Heart left ventricle (tissue), 16 donors: ENCODE measurements at regions of chr6 and their contacts with region 1.

Region 1: DNA sequence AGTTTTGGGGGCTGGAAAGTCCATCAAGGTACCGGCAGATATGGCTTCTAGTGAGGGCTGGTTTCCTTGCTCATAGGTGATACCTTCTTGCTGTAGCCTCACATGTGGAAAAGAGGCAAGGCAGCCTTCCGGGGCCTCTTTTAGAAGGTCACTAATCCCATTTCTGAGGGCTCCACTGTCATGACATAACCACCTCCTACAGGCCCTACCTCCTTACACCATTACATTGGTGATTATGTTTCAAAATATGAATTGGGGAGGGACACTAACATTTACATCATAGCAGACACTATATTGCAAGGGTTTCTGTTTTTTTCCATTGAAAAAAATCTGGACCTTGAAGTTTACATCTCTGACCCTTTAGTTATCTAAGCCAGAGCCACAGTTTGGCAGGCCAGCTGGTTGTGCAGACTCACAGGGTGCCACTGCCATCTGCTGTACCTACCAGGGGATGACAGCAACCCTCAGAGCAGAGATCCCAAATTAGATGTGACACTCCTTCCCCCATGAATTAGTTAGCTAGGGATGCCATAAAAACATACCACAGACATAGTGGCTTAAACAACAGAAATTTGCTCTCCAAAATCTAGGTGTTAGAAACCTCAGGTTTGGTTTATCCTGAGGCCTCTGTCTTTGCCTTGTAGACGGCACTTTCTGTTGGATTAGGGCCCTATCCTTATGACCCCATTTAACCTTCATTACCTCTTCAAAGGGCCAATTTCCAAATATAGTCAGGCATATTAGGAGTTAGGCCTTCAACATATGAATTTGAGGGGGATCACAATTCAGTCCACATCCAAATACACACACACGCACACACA is 166.4 kb upstream of the RNF217 start:
- DNase-seq: peak in 4 of 5 donors; percentile 25 to 50 (median 38)
- ATAC-seq: peak; percentile 86 to 92 (median 88)
- H3K4me3 ChIP-seq: no peak overlapping the region
- H3K27ac ChIP-seq: no peak overlapping the region
- H3K4me1 ChIP-seq: no peaks in the 10 kb centered on the region
- H3K27me3 ChIP-seq: no peaks in the 10 kb centered on the region
- CTCF ChIP-seq: peak in 11 of 12 donors; percentile 32 to 61 (median 47)
- POLR2A ChIP-seq: no peak

Region 2: GRCh38 chr6:123777563-123777962 is 1018.3 kb before region 1 on chr6:
- intact Hi-C with region 1: loop called in 1 of 10 experiments (anchors 10 kb)
- DNase-seq: no peak
- ATAC-seq: no peak
- H3K4me3 ChIP-seq: no peak overlapping the region
- H3K27ac ChIP-seq: no peak overlapping the region
- H3K4me1 ChIP-seq: no peaks in the 10 kb centered on the region
- H3K27me3 ChIP-seq: no peaks in the 10 kb centered on the region
- CTCF ChIP-seq: peak in 5 of 12 donors; percentile 5 to 24 (median 17)
- POLR2A ChIP-seq: no peak

Region 3: DNA sequence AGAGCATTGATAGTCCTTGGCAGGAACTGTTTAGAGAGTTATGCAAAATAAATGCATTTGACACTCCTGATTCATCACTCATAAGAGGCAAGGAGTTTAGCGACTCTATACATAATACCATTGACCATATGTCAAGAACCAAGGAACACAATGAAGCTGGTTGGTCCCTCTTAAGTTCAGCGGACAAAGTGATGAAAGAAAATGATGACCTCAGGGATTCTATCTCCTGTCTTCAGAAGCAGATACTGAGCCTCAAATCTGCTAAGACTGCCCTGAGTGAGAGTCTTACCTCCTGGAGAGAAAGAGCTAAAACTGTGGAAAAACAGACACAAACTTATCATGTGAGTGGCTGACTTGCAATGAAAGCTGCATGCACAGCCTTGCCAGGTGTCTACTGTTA is 1001.7 kb before region 1 on chr6:
- intact Hi-C with region 1: loop called in 1 of 10 experiments (anchors 10 kb)
- DNase-seq: no peak
- ATAC-seq: no peak
- H3K4me3 ChIP-seq: no peak overlapping the region
- H3K27ac ChIP-seq: no peak overlapping the region
- H3K4me1 ChIP-seq: no peaks in the 10 kb centered on the region
- H3K27me3 ChIP-seq: peaks cover 0 to 9% (median 0%) of the 10 kb centered on the region in 9 donors
- CTCF ChIP-seq: no peak
- POLR2A ChIP-seq: no peak

Region 4: GRCh38 chr6:124881898-124882579 is 86.2 kb after region 1 on chr6:
- intact Hi-C with region 1: no loop called
- DNase-seq: no peak
- ATAC-seq: no peak
- H3K4me3 ChIP-seq: no peak overlapping the region
- H3K27ac ChIP-seq: no peak overlapping the region
- H3K4me1 ChIP-seq: peaks cover 0 to 14% (median 10%) of the 10 kb centered on the region in 12 donors
- H3K27me3 ChIP-seq: no peaks in the 10 kb centered on the region
- CTCF ChIP-seq: no peak
- POLR2A ChIP-seq: no peak